ENCODE measurements at regions of chrX and their contacts with region 1.

Region 1: DNA sequence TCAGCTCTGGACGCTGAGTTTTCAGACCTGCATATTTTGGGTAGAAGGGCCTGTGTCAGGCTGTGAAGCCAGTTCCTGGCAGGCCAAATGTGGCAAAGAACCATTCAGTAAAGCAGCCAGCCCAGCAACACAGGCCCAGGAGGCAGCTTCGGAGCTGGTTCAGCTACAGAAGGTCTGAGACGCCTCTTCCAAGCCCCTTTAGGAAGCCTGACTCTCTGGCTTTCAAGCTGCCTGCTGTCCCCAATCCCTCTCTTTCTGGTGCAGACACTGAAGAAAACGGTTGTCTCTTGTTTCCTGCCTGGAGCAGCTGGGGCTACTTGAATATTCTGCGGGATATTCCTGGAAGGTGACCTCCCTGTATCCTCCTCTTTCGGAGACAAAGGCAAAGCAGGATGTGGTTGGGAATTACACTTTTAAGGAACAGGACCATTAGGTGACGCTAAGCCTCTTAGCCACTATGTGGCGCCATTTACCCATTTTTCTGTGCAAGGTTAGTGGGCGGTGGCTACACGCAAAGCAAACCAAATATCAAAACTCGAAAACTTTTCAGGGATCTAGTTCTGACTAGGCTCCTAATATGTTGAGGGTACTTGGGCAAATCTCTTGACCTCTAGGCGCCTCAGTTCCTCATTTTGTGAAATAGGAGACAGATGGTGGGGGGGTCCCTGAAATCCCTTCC is 47.2 kb upstream of the LAS1L start:
- DNase-seq: peak; percentile 53 to 81 (median 59)
- H3K4me3 ChIP-seq: no peak overlapping the region
- H3K27ac ChIP-seq: no peak overlapping the region
- H3K4me1 ChIP-seq: no peaks in the 10 kb centered on the region
- H3K27me3 ChIP-seq: peaks cover 16% of the 10 kb centered on the region
- CTCF ChIP-seq: peak; percentile 68 to 88 (median 76)
- POLR2A ChIP-seq: no peak

Region 2: GRCh38 chrX:65783746-65784145 is 201.9 kb after region 1 on chrX:
- intact Hi-C with region 1: no loop called
- DNase-seq: no peak
- H3K4me3 ChIP-seq: no peak overlapping the region
- H3K27ac ChIP-seq: no peak overlapping the region
- H3K4me1 ChIP-seq: no peaks in the 10 kb centered on the region
- H3K27me3 ChIP-seq: peaks cover 4% of the 10 kb centered on the region
- CTCF ChIP-seq: no peak
- POLR2A ChIP-seq: no peak

Region 3: DNA sequence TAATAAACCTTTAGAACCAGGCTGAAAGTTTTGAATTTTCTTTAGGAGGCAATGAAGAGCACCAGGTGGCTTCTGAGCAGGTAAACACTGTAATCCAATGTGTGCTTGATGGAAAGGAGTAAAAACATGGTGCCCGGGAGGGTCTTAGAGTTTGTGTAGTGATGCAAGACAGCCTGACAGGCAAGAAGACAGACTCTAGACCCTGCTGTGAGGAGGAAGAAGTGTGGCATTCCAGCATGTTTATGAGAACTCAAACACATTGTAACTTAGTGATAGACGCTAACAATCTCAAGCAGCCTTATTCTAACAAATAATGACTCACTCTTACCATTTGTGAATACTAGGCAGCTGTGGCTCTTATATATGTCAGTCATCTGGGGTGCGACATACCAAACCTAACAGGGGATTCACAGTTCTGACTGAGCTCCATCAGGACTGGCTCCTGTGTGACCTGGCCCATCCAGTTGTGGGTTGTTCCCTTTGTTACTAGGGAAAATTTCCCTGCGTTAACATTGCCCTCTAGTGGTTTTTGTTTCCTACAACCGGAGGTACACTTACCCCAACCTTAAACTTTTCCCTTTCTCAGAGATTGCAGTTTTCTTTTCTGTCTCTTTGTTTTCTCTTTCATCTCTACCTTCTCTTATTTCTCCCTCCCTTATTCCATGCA is 404.3 kb after region 1 on chrX:
- intact Hi-C with region 1: loop called (anchors 5 kb)
- DNase-seq: peak; percentile 23 to 53 (median 28)
- H3K4me3 ChIP-seq: no peak overlapping the region
- H3K27ac ChIP-seq: no peak overlapping the region
- H3K4me1 ChIP-seq: no peaks in the 10 kb centered on the region
- H3K27me3 ChIP-seq: peaks cover 12% of the 10 kb centered on the region
- CTCF ChIP-seq: peak; percentile 46 to 67 (median 56)
- POLR2A ChIP-seq: no peak